ENCODE measurements at regions of chr5 and their contacts with region 1.

Region 1: GRCh38 chr5:80093796-80094195 is 58.6 kb downstream of the THBS4 start:
- DNase-seq: no peak
- H3K4me3 Mint-ChIP-seq: no peak overlapping the region
- H3K27ac Mint-ChIP-seq: no peak overlapping the region
- H3K4me1 Mint-ChIP-seq: peaks cover 20% of the 10 kb centered on the region
- H3K27me3 Mint-ChIP-seq: no peaks in the 10 kb centered on the region

Region 2: DNA sequence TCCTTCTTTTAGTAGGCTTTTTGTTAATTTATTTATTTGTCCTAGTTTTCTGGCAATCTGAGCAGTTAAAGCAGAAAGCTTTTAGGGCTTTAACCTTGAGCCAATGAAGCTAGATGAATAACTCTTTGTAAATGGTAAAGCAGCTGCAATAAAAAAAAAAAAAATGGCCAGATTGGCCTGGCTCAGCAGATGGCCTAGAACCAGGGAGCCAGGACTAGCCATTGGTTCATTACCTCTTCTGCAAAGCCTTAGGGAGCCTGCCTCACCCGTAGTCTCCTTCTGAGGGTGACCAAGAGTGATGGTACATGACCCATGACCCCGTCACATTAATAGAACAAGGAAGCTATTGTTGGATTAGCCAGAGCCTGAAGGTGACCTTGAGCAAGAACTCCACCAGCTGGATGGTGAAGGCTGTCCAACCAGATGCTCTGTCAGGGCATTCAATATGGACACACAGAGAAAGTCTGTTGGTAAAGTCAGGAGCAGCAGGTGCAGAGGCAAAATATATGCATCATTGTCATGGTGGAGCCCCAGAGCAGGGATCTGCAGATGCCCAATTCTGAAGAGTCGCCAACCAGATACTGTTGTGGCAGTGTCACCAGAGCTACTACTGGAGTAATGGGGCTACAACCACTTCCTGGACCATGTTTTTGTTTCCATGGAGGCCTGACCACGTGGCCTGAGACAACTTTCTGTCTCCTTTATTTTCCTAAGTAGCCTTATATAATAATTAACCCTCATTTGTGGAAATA is 203.5 kb before region 1 on chr5:
- CTCF ChIA-PET with region 1: no interaction called
- intact Hi-C with region 1: no loop called
- DNase-seq: no peak
- H3K4me3 Mint-ChIP-seq: no peak overlapping the region
- H3K27ac Mint-ChIP-seq: no peak overlapping the region
- H3K4me1 Mint-ChIP-seq: no peaks in the 10 kb centered on the region
- H3K27me3 Mint-ChIP-seq: peaks cover 9% of the 10 kb centered on the region

Region 3: DNA sequence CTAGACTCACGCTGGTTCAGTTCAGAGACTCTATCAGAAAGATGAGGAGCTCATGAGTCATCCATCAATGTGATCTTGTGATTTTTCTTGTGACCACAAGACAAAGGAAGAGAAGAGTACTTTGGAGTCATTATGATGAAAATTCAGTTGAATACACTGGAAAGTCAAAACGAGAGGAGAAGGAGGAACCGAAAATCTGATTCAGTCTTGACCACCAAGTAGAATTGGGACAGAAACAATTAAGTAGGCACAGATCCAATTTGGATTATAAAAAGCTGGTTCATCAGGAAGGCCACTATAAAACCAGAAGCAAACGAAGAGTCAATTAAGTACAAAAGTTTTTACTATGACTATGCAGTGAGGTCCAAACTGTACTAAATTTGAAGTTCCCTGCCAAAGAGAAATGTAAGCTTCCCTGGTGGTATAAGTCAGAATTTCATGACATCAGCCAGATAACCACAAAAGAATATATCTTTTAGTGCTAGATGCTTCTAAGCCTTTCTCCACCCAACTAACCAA is 32.2 kb after region 1 on chr5:
- CTCF ChIA-PET with region 1: interaction called, 12 read pairs
- intact Hi-C with region 1: no loop called
- DNase-seq: peak; percentile 44
- H3K4me3 Mint-ChIP-seq: no peak overlapping the region
- H3K27ac Mint-ChIP-seq: peak overlapping the region; percentile 43
- H3K4me1 Mint-ChIP-seq: peaks cover 47% of the 10 kb centered on the region
- H3K27me3 Mint-ChIP-seq: no peaks in the 10 kb centered on the region

Region 4: GRCh38 chr5:80255732-80256479 is 162.1 kb after region 1 on chr5 and contains the start of gene SERINC5:
- CTCF ChIA-PET with region 1: interaction called, 15 read pairs
- intact Hi-C with region 1: no loop called
- DNase-seq: peak; percentile 86
- H3K4me3 Mint-ChIP-seq: peak within 1 kb of the TSS; percentile 97
- H3K27ac Mint-ChIP-seq: peak within 1 kb of the TSS; percentile 98
- H3K4me1 Mint-ChIP-seq: peaks cover 43% of the 10 kb centered on the region
- H3K27me3 Mint-ChIP-seq: no peaks in the 10 kb centered on the region
- total RNA-seq, gene SERINC5: 34.8 to 36.4 TPM

Region 5: DNA sequence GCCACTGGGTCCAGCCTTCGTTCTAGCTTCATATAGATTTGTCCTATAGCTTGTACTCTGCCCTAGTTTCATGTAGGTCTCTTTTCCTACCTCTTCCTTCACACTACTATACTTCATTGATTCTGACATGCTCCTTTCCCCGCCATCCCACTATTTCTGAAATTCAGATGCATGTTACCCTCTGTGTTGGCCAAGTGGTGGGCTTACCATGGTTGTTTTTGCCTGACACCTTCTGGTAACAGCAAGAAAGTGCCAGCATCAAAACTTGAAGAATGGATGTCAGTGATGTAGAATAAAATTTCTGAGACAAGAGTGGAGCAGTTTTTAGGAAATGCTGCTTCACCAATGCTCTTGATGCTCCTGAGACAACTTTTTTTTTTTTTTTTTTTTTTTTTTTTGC is 181.6 kb after region 1 on chr5:
- CTCF ChIA-PET with region 1: interaction called, 86 read pairs
- intact Hi-C with region 1: loop called (anchors 1 kb)
- DNase-seq: peak; percentile 53
- H3K4me3 Mint-ChIP-seq: no peak overlapping the region
- H3K27ac Mint-ChIP-seq: no peak overlapping the region
- H3K4me1 Mint-ChIP-seq: peaks cover 26% of the 10 kb centered on the region
- H3K27me3 Mint-ChIP-seq: no peaks in the 10 kb centered on the region

Region 6: GRCh38 chr5:80308526-80308925 is 214.7 kb after region 1 on chr5:
- CTCF ChIA-PET with region 1: interaction called, 183 read pairs
- intact Hi-C with region 1: loop called (anchors 1 kb)
- DNase-seq: no peak
- H3K4me3 Mint-ChIP-seq: no peak overlapping the region
- H3K27ac Mint-ChIP-seq: no peak overlapping the region
- H3K4me1 Mint-ChIP-seq: no peaks in the 10 kb centered on the region
- H3K27me3 Mint-ChIP-seq: no peaks in the 10 kb centered on the region

Region 7: GRCh38 chr5:80654391-80655230 is 560.8 kb after region 1 on chr5 and contains the starts of genes DHFR and MSH3:
- CTCF ChIA-PET with region 1: no interaction called
- intact Hi-C with region 1: loop called (anchors 5 kb)
- DNase-seq: peak; percentile 95
- H3K4me3 Mint-ChIP-seq: peak within 1 kb of the TSS; percentile 95
- H3K27ac Mint-ChIP-seq: peak within 1 kb of the TSS; percentile 99
- H3K4me1 Mint-ChIP-seq: peaks cover 25% of the 10 kb centered on the region
- H3K27me3 Mint-ChIP-seq: no peaks in the 10 kb centered on the region
- total RNA-seq, gene DHFR: 107 to 112 TPM
- total RNA-seq, gene MSH3: 25.1 to 25.8 TPM

Region 8: DNA sequence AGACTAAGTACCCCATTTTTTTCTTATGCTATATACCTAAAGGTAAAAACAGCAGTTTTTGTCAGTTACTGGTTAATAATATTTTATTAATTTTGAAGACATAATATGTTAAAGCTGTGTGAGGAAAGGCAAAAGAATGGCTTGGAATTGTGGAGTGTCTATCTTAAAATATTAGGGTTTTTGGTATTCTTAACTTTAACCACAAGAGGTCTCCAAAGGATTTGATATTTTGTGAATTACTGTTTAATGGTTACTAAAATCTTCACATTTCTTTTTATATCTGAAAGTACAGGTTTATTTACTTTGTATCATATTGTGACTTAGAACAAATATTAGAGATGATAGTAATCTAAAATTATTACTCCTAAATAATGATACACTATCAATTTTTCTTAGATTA is 593.0 kb after region 1 on chr5:
- CTCF ChIA-PET with region 1: no interaction called
- intact Hi-C with region 1: no loop called
- DNase-seq: no peak
- H3K4me3 Mint-ChIP-seq: no peak overlapping the region
- H3K27ac Mint-ChIP-seq: no peak overlapping the region
- H3K4me1 Mint-ChIP-seq: peaks cover 11% of the 10 kb centered on the region
- H3K27me3 Mint-ChIP-seq: no peaks in the 10 kb centered on the region

Region 9: DNA sequence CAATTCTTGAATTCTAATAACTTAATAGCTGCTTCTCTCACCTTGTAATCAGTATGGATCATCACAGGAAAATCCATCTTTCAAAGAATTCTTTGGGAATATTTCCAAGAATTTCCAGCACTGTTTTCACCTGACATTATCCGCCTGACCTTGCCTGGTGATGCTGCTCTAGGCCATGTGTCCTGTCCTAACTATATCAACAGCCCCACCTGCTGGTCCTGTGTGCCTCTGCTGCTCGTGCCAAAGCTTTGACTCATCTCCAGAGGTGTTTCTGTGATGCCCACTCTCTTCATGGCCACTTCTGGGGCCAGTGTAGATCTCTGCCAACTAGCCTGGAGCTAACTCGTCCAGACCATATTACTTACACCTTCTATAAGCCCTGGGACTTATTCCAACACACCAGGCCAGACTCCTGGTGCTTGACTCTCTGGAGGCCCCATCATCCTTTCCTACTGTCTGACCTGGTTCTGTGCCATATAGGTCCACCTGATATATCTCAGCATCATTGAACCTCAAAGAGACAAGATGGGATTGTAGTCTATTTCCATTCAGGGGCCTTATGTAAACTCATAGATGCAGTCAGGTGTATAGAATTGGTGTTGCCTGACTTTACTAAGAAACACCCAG is 1071.8 kb after region 1 on chr5:
- CTCF ChIA-PET with region 1: no interaction called
- intact Hi-C with region 1: loop called (anchors 10 kb)
- DNase-seq: peak; percentile 88
- H3K4me3 Mint-ChIP-seq: no peak overlapping the region
- H3K27ac Mint-ChIP-seq: no peak overlapping the region
- H3K4me1 Mint-ChIP-seq: peaks cover 3% of the 10 kb centered on the region
- H3K27me3 Mint-ChIP-seq: no peaks in the 10 kb centered on the region